HAP-1 (cell line): ENCODE measurements at regions of chr7 and their contacts with region 1.

Region 1: DNA sequence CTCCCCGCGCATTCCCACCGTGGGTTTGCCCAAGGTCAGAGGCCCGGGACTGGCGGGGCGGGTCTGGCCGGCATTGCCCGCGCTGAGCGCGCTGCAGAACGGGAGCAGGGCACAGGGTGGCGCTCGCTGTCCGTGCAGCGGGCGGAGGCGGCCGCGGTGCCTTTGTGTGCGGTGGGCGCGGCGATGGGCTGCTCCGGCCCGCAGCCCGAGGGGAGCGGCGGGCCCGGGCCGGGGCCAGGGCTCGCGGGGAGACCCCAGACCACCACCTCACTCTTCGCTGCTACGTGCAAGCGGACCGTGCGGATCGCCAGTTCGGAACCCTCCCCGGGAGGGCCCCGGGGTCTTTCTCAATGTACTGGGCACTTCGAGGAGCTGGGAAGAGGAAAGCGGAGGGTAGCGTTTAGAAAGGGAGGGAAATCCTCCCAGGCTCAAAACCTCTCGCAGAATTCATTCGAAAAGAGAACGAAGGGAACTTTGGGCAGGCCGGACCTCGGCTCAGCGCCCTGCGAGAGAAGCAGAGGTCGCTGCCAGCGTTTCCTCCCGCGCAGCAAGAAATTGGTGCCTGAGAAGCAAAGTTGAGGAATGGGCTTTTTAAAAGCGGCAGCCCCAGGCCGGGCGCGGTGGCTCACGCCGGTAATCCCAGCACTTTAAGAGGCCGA is 8.5 kb downstream of the SP8 start:
- DNase-seq: peak; percentile 45 to 84
- H3K4me3 ChIP-seq: peak overlapping the region; percentile 32
- H3K4me1 ChIP-seq: peaks cover 13% of the 10 kb centered on the region
- H3K27me3 ChIP-seq: peaks cover 31% of the 10 kb centered on the region

Region 2: DNA sequence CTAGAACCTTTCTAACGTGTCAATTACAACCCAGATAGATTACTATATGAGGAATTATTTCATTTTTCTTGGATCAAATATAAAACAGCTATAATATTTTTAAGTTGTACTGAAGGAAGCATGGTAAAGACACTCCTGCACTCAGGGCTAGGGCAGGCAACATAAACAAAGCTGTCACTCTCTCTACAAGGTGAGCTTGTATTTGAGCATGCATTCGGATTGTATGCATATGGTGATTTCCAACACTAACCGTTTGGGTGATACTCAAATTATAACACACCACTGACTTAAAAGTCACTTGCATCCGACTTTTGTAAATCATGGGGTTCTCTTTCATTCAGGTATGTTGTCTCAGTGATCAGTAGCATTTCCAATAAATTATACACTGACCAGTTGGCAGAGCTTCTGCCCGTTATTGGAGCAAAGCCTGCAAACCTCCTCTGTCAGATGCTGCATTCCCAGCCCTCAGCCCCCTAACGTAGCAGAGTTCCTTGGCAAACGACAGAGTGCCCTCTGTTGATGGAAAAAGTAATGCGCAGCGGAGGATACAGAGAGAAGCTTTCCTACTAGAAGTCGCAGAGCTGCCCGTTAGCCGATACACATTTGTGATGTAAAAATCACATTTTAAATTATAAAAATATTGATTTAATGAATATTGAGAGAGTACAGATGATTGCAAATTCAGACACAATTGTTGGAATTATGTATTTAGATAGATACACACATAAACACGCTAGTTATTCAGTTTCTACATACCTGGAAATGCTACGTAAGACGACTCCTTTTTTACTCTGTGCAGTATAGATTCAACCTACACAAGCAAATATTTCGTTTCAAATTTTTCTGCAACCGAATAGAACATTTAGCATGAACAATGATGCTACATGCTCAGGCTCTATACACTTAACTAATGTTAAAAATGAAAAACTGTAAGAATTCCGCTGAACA is 475.8 kb after region 1 on chr7:
- in situ Hi-C with region 1: loop called (anchors 5 kb)
- DNase-seq: peak; percentile 79 to 84
- H3K4me3 ChIP-seq: no peak overlapping the region
- H3K4me1 ChIP-seq: peaks cover 4% of the 10 kb centered on the region
- H3K27me3 ChIP-seq: peaks cover 25% of the 10 kb centered on the region

Region 3: DNA sequence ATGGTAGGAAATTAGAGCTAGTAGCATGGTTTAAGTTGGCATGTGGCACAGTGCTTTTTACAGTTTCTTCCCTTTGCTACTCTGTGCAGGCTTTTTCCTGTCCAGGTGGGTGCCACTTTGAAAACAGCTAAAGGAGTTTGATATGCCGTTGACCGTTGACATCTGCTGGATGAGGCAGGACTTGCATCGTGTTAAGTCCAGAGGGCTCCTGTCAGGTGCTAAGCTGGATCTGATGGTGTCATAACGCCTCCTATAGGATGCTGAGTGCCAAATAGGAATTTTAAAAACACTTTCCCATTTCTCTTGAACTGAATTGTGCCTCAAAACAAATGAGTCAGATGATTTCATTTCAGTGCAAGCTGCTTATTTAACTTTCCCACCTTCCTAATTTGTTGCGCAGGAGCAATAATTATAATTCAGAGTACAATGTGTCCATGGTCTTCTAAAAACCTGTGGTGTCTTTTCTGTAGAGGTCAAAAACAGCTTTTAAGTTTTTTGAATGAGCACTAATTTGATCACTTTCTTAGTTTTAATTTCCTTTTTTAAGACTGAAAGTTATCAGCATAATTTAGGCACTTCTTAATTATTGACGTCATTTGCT is 989.2 kb after region 1 on chr7:
- in situ Hi-C with region 1: loop called (anchors 10 kb)
- DNase-seq: peak; percentile 78 to 85
- H3K4me3 ChIP-seq: no peak overlapping the region
- H3K4me1 ChIP-seq: peaks cover 5% of the 10 kb centered on the region
- H3K27me3 ChIP-seq: peaks cover 2% of the 10 kb centered on the region; the same call in 1 of the 2 replicates